Left colon (tissue), 2 donors: ENCODE measurements at regions of chr2 and their contacts with region 1.

Region 1: DNA sequence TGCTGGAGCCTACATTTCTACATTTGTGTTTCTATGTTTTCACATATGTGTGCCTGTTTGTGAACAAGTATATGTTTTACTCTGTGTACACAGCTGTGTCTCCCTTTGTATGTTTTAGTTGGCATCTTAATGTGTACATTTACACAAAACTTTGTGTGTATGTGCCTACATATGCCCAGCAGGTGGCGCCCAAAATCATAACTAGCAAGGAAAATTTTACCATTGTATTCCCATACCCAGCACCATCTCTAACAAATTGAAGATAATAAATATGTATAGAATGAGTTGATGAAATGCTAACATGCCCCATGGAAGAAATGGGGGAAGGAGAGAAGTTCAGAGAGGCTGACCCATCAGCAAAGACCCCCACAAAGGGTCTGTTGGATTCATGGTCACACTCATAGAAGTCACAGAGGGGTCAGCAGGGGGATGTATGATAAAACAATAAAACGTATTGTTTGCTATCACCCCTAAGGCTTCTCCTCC is 48.1 kb downstream of the PKDCC start:
- DNase-seq: peak in 1 of 2 donors; percentile 91
- ATAC-seq: peak; percentile 42

Region 2: GRCh38 chr2:41853427-41854216 is 242.3 kb before region 1 on chr2:
- intact Hi-C with region 1: loop called in 1 of 2 experiments (anchors 5 kb)
- DNase-seq: peak in 1 of 2 donors; percentile 61
- ATAC-seq: peak; percentile 57

Region 3: GRCh38 chr2:42196403-42197267 is 100.7 kb after region 1 on chr2:
- intact Hi-C with region 1: loop called in 1 of 2 experiments (anchors 10 kb)
- DNase-seq: peak; percentile 62 to 63
- ATAC-seq: peak; percentile 70

Region 4: DNA sequence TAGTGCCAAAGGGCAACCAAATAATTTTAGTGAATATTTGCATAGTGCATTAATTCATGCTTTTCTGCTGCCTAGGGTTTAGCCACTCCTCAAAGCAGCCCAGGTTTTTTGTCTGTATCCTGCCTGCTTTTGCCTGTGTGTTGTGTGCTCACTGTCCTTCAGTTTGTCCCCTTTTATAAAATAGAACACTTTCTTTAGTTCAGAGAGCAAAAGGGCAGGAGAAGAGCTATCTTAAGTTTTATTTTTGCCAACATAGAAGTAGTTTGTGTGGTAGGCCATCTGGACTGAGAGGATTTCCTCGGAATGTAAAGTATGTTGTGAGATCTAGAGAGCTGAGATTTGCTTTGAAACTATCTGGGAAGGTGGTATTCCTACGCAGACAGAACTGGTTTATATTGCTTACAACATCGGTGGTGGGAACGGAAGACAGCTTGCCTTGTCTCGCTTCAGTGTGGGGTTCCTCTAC is 138.0 kb after region 1 on chr2:
- intact Hi-C with region 1: loop called in 1 of 2 experiments (anchors 5 kb)
- DNase-seq: no peak
- ATAC-seq: no peak

Region 5: DNA sequence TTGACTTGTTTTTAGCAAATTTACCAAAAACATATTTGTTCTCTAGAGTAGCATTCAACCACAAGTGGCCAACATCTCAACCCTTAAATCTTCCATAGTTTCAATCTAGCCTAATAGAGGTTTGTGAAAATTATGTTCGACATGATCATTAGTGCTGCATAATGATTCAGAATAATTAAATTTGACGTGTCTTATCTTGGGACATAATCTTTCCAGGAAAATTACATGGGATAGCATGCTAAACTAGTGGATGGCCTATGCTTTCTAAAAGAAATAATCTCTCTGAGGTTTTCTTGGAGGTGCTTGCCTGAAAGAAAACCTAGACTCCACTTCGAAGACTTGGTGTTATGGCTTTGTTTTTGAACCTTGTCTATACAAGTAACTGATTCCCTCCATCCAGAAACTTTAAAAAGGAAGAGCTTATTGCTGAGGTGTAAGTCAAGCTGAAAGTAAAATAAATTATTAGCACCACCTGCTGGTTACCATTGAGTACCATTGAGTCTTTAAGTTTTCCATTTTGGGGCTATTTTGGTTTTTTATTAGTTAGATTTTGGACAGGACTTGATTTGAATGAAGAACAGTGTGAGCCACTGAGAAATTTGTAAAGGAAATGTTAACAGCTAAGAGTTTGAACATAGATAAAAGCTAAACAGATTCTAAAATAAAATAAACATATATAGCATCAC is 232.3 kb after region 1 on chr2:
- intact Hi-C with region 1: loop called in 1 of 2 experiments (anchors 2 kb)
- DNase-seq: no peak
- ATAC-seq: peak; percentile 28